PC-3 (cell line): ENCODE measurements at regions of chr10 and their contacts with region 1.

Region 1: GRCh38 chr10:77240041-77240652 is 397.5 kb downstream of the KCNMA1 start:
- DNase-seq: peak; percentile 88
- ATAC-seq: peak; percentile 80
- H3K4me3 ChIP-seq: no peak overlapping the region
- H3K27ac ChIP-seq: peak overlapping the region; percentile 58
- H3K4me1 ChIP-seq: peaks cover 52% of the 10 kb centered on the region
- H3K27me3 ChIP-seq: no peaks in the 10 kb centered on the region
- CTCF ChIP-seq: no peak

Region 2: GRCh38 chr10:77090381-77091356 is 149.5 kb before region 1 on chr10:
- CTCF ChIA-PET with region 1: no interaction called
- POLR2A ChIA-PET with region 1: no interaction called
- intact Hi-C with region 1: no loop called
- DNase-seq: no peak
- ATAC-seq: no peak
- H3K4me3 ChIP-seq: no peak overlapping the region
- H3K27ac ChIP-seq: no peak overlapping the region
- H3K4me1 ChIP-seq: no peaks in the 10 kb centered on the region
- H3K27me3 ChIP-seq: no peaks in the 10 kb centered on the region
- CTCF ChIP-seq: no peak

Region 3: DNA sequence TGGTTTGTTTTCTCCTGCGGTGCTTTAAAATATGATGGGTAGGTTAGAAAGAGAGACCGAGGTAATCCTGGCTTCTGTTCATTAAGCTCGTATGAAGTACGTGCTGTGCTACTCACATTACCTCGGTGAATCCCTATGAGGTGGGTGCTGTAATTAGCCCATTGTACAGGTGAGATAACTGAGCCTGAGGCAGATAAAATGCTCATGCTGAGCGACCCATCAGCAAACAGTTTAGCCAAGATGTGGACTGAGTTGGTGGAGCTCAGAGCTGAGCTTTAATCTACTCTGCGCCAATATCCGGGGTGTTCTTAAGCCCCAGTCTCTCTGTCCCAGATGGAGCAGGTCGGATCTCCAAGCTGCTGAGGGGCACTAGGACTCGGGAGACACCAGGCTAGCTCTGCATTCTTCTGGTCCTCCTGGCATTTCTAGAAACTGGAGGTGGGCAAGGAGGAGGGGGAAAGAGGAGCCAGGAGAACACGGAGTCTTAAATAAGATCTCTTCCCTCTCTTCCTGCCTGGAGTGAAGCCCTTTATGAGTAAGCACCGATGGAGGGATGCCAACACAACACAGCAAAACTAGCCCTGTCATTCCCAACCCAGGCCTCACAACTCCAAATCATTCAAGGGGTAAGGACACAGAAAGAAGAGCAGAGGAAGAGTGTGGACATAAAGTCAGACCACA is 61.0 kb before region 1 on chr10:
- CTCF ChIA-PET with region 1: interaction called, 19 read pairs
- POLR2A ChIA-PET with region 1: interaction called, 3 read pairs
- intact Hi-C with region 1: loop called (anchors 1 kb)
- DNase-seq: peak; percentile 100
- ATAC-seq: peak; percentile 94
- H3K4me3 ChIP-seq: no peak overlapping the region
- H3K27ac ChIP-seq: peak overlapping the region; percentile 48
- H3K4me1 ChIP-seq: peaks cover 36% of the 10 kb centered on the region
- H3K27me3 ChIP-seq: no peaks in the 10 kb centered on the region
- CTCF ChIP-seq: no peak

Region 4: GRCh38 chr10:77220150-77220549 is 20.0 kb before region 1 on chr10:
- CTCF ChIA-PET with region 1: no interaction called
- POLR2A ChIA-PET with region 1: no interaction called
- intact Hi-C with region 1: loop called (anchors 2 kb)
- DNase-seq: no peak
- ATAC-seq: no peak
- H3K4me3 ChIP-seq: no peak overlapping the region
- H3K27ac ChIP-seq: no peak overlapping the region
- H3K4me1 ChIP-seq: peaks cover 6% of the 10 kb centered on the region; the same call in 1 of the 2 replicates
- H3K27me3 ChIP-seq: no peaks in the 10 kb centered on the region
- CTCF ChIP-seq: no peak

Region 5: DNA sequence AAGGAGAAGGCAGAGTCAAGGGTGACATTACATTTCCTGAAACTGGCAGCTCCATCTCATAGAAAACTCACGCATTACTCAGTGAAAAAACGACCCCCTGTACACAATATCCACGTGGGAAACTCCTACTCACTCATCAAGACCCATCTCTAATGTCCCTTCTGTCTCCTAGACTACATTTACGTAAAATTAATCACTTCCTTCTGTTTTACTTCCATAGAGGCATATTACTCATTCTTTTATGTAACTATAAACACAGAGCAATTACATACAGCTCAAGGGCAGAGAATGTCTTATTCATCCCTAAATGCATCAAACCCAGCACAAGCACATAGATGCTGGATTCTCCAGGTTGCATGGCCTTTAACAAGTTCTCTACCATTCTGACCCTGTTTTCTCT is 115.7 kb after region 1 on chr10:
- CTCF ChIA-PET with region 1: interaction called, 6 read pairs
- POLR2A ChIA-PET with region 1: no interaction called
- intact Hi-C with region 1: loop called (anchors 2 kb)
- DNase-seq: peak; percentile 100
- ATAC-seq: peak; percentile 83
- H3K4me3 ChIP-seq: no peak overlapping the region
- H3K27ac ChIP-seq: peak overlapping the region; percentile 86
- H3K4me1 ChIP-seq: peaks cover 60% of the 10 kb centered on the region
- H3K27me3 ChIP-seq: no peaks in the 10 kb centered on the region
- CTCF ChIP-seq: no peak